IMR-90 (cell line): ENCODE measurements at regions of chr12 and their contacts with region 1.

Region 1: DNA sequence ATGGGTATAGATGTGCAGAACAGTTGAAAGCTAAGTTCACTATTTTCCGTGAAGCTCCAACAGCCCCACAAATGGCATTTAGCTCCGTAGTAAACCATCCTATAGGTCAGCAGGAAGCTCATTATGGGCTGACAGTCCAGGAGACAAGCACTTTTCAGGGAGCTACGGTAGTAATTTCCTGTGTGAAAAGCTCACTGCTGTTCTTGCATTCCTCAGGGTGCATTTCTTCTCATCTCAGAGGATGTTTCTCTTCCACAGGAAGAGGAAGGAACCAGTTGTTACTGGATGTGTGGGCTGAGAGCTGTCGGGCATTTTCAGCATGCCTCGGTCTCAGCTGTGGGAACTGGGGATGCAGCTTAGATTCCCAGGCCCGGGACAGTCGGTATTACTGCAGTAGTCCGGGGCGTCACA is 72.8 kb downstream of the GALNT4 start:
- DNase-seq: peak; percentile 87
- ATAC-seq: peak; percentile 50
- H3K4me3 ChIP-seq: no peak overlapping the region
- H3K27ac ChIP-seq: peak overlapping the region; percentile 82
- H3K4me1 ChIP-seq: peaks cover 22% of the 10 kb centered on the region
- H3K27me3 ChIP-seq: no peaks in the 10 kb centered on the region
- CTCF ChIP-seq: no peak
- POLR2A ChIP-seq: no peak
- RAD21 ChIP-seq: 0 out of 2 replicates have a peak, but pooled peaks have one; percentile 13

Region 2: DNA sequence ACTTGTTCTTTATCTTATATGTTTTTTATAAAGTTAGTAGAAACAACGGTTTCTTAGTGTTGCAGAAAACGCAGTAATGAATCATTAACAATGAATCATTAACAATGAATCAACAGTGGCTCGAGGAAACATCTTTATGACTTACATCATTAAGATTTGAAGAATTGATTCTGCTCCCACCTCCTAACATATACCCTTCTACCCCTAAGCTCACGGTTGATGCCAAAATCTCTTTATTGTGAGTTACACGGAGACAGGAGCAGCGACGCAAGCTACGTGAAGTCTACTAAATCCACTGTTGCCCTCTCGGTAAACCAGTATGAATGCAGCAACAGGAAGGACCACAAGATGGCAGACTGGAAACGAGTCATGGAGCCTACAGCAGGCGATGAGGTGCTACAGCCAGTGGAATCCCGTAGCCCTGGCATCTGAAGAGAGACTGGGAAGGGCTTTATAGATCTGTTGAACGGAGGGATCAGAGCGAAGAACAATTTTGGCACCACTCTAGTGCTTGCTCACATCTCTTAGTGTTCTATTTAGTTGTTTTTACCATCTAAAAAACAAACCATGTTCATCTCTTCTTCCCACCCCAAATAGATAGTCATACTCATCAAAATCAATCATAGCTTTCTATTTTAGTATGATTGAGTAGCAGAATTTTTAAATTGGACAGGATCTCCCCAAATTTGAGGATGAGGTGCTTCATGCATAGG is 432.3 kb before region 1 on chr12:
- CTCF ChIA-PET with region 1: interaction called, 3 read pairs
- POLR2A ChIA-PET with region 1: no interaction called
- dilution Hi-C with region 1: no loop called
- in situ Hi-C with region 1: loop called (anchors 5 kb)
- intact Hi-C with region 1: no loop called
- DNase-seq: peak; percentile 88
- ATAC-seq: peak; percentile 97
- H3K4me3 ChIP-seq: peak overlapping the region; percentile 28
- H3K27ac ChIP-seq: no peak overlapping the region; the same call in 1 of the 2 replicates
- H3K4me1 ChIP-seq: no peaks in the 10 kb centered on the region
- H3K27me3 ChIP-seq: no peaks in the 10 kb centered on the region
- CTCF ChIP-seq: peak; percentile 96
- POLR2A ChIP-seq: no peak; the same call in 1 of the 2 replicates
- RAD21 ChIP-seq: peak; percentile 95

Region 3: GRCh38 chr12:89101440-89101839 is 350.4 kb before region 1 on chr12:
- CTCF ChIA-PET with region 1: no interaction called
- POLR2A ChIA-PET with region 1: no interaction called
- dilution Hi-C with region 1: no loop called
- in situ Hi-C with region 1: no loop called
- intact Hi-C with region 1: no loop called
- DNase-seq: no peak
- ATAC-seq: no peak
- H3K4me3 ChIP-seq: no peak overlapping the region
- H3K27ac ChIP-seq: no peak overlapping the region
- H3K4me1 ChIP-seq: peaks cover 5% of the 10 kb centered on the region
- H3K27me3 ChIP-seq: no peaks in the 10 kb centered on the region; the same call in 1 of the 2 replicates
- CTCF ChIP-seq: no peak
- POLR2A ChIP-seq: no peak
- RAD21 ChIP-seq: no peak

Region 4: GRCh38 chr12:89192428-89192827 is 259.4 kb before region 1 on chr12:
- CTCF ChIA-PET with region 1: no interaction called
- POLR2A ChIA-PET with region 1: no interaction called
- dilution Hi-C with region 1: no loop called
- in situ Hi-C with region 1: no loop called
- intact Hi-C with region 1: loop called (anchors 5 kb)
- DNase-seq: peak; percentile 79
- ATAC-seq: peak; percentile 96
- H3K4me3 ChIP-seq: no peak overlapping the region
- H3K27ac ChIP-seq: peak overlapping the region; percentile 90
- H3K4me1 ChIP-seq: peaks cover 7% of the 10 kb centered on the region
- H3K27me3 ChIP-seq: no peaks in the 10 kb centered on the region
- CTCF ChIP-seq: no peak
- POLR2A ChIP-seq: no peak
- RAD21 ChIP-seq: no peak

Region 5: GRCh38 chr12:89373763-89374572 is 77.9 kb before region 1 on chr12:
- CTCF ChIA-PET with region 1: no interaction called
- POLR2A ChIA-PET with region 1: no interaction called
- dilution Hi-C with region 1: no loop called
- in situ Hi-C with region 1: no loop called
- intact Hi-C with region 1: loop called (anchors 5 kb)
- DNase-seq: peak; percentile 90
- ATAC-seq: peak; percentile 64
- H3K4me3 ChIP-seq: no peak overlapping the region
- H3K27ac ChIP-seq: no peak overlapping the region
- H3K4me1 ChIP-seq: peaks cover 20% of the 10 kb centered on the region
- H3K27me3 ChIP-seq: no peaks in the 10 kb centered on the region
- CTCF ChIP-seq: no peak
- POLR2A ChIP-seq: no peak
- RAD21 ChIP-seq: no peak

Region 6: GRCh38 chr12:89417246-89417977 is 34.4 kb before region 1 on chr12:
- CTCF ChIA-PET with region 1: no interaction called
- POLR2A ChIA-PET with region 1: no interaction called
- dilution Hi-C with region 1: no loop called
- in situ Hi-C with region 1: no loop called
- intact Hi-C with region 1: loop called (anchors 5 kb)
- DNase-seq: peak; percentile 64
- ATAC-seq: peak; percentile 73
- H3K4me3 ChIP-seq: no peak overlapping the region
- H3K27ac ChIP-seq: peak overlapping the region; percentile 72
- H3K4me1 ChIP-seq: peaks cover 18% of the 10 kb centered on the region
- H3K27me3 ChIP-seq: no peaks in the 10 kb centered on the region
- CTCF ChIP-seq: no peak
- POLR2A ChIP-seq: no peak
- RAD21 ChIP-seq: no peak